ENCODE measurements at regions of chr17 and their contacts with region 1.

Region 1: GRCh38 chr17:80605326-80606066 is 60.9 kb downstream of the RPTOR start:
- DNase-seq: peak; percentile 39
- H3K4me3 Mint-ChIP-seq: no peak overlapping the region
- H3K27ac Mint-ChIP-seq: peak overlapping the region; percentile 74
- H3K4me1 Mint-ChIP-seq: peaks cover 57% of the 10 kb centered on the region
- H3K27me3 Mint-ChIP-seq: no peaks in the 10 kb centered on the region

Region 2: DNA sequence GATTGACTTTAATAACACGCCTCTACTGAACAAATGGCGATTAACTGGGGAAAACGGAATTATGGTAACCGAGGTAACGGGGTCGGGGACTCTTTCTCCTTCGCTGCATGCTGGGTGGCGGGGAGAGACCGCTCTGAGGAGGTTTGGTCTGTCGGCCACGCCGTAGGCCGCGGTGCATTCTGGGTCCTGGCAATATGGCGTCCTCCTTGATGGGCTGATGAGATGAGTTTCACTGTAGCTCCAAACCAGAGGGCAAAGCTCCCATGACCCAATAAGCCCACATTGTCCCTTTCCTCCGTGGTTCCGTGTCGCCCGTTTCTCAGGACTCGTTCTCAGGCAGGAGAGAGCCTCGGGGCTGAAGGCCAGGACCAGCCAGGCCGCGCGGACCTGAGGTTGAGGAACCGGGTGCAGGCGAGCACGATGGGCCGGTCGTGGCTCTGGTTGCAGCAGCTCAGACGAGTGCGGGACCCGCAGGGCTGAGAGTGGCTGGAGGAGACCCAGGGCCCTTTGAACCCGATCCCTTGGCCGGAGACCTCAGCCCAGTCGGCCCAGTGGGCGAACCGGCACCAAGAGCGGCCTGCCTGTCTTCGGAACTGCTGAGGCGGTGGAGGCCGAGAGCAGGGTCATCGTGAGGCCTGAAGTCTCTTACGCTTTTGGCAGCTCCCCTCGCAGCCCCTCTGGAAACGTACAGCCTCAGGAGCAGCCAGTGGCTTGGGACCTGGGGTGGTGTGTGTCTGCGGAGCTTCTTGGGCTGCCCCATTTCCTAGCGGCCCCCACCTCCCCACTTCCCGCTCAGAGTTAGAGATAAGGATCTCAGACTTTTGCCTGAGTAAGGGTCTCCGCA is 60.6 kb before region 1 on chr17 and contains the start of gene RPTOR:
- intact Hi-C with region 1: no loop called
- DNase-seq: peak; percentile 86
- H3K4me3 Mint-ChIP-seq: peak within 1 kb of the TSS; percentile 93
- H3K27ac Mint-ChIP-seq: peak within 1 kb of the TSS; percentile 94
- H3K4me1 Mint-ChIP-seq: peaks cover 25% of the 10 kb centered on the region
- H3K27me3 Mint-ChIP-seq: no peaks in the 10 kb centered on the region
- total RNA-seq, gene RPTOR: 59.9 and 62.4 TPM in 2 replicates

Region 3: DNA sequence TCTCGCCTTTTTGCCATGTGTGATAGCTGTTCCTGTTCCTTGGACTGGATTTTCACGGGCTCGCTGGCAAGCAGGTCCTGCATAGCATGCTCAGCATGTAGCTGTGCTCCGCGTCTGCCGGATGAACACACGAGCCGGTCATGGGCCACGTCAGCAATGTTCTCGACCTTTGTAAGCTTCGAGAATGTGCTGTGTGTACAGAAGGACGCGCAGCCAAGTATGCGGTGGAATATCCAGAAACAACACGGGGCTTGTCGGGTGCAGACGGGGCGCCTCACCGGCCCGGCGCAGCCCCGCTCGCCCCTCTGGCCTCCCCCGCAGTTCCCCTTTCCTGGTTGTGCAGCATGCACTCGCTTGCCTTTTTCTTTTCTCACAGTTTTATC is 18.7 kb before region 1 on chr17:
- intact Hi-C with region 1: no loop called
- DNase-seq: no peak
- H3K4me3 Mint-ChIP-seq: peak overlapping the region; percentile 35
- H3K27ac Mint-ChIP-seq: peak overlapping the region; percentile 36
- H3K4me1 Mint-ChIP-seq: peaks cover 46% of the 10 kb centered on the region
- H3K27me3 Mint-ChIP-seq: no peaks in the 10 kb centered on the region

Region 4: GRCh38 chr17:80649678-80650672 is 44.5 kb after region 1 on chr17:
- intact Hi-C with region 1: loop called (anchors 2 kb)
- DNase-seq: peak; percentile 53
- H3K4me3 Mint-ChIP-seq: peak overlapping the region; percentile 10
- H3K27ac Mint-ChIP-seq: peak overlapping the region; percentile 88
- H3K4me1 Mint-ChIP-seq: peaks cover 62% of the 10 kb centered on the region
- H3K27me3 Mint-ChIP-seq: no peaks in the 10 kb centered on the region

Measured in activated T-helper 2 cell treated with anti-CD3 and anti-CD28 coated beads, Interferon-gamma antibody, Interleukin-2, Interleukin-4, amounts not matched to agents 10 μg/mL and 5 μg/mL and 100 μg/mL, durations not matched to agents 14 hours and 24 hours and 36 hours (primary cell).